Heart right ventricle (tissue), 16 donors: ENCODE measurements at regions of chr18 and their contacts with region 1.

Region 1: GRCh38 chr18:57209713-57210661 is 63.1 kb downstream of the BOD1L2 start:
- DNase-seq: peak; percentile 22 to 26
- ATAC-seq: peak; percentile 64 to 96 (median 80)
- H3K4me3 ChIP-seq: peak overlapping the region in 3 of 10 donors; percentile 11 to 17 (median 12)
- H3K27ac ChIP-seq: no peak overlapping the region
- H3K4me1 ChIP-seq: peaks cover 0 to 14% (median 9%) of the 10 kb centered on the region in 9 donors
- H3K27me3 ChIP-seq: peaks cover 0 to 52% (median 28%) of the 10 kb centered on the region in 7 donors
- CTCF ChIP-seq: no peak

Region 2: DNA sequence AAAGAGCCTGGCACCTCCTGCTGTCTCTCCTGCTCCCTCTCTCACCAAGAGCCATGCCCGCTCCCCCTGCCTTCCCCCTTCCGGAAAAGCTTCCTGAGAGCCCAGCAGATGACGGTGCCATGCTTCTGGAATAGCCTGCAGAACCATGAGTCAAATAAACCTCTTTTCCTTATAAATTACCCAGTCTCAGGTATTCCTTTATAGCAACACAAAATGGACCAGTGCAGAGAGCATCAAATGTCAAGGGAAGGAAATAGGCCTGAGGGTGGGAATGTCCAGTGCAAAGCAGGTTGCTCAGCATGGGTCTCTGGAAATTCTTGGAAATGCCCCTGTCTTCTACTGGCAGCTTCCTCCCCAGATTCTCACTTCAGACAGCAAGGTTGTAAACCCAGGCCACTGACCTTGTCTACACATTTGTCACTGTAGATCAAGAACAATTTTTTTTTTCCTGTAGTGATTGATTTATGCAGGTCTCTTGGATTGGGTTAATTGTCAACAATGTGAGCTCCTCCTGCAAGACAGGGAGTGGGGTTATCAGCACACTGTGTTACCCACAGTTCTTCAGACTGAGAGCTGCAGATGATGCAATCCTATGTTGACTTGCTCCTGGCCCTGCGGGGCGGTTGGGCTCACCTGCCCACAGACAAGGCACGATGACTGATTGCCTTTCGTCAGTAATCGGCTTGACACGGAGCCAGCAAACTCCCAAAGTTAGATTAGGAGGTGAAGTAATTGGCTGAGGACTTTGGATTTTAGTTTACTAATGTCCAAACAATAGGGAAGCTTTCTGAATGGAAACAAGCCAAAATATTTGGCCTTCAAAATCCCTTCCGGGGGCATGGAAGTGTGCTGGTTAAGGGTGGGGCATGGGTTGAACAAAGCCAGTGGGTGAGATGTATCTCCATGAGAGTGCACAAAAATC is 68.5 kb before region 1 on chr18:
- intact Hi-C with region 1: loop called in 1 of 10 experiments (anchors 10 kb)
- DNase-seq: no peak
- ATAC-seq: no peak
- H3K4me3 ChIP-seq: no peak overlapping the region
- H3K27ac ChIP-seq: no peak overlapping the region
- H3K4me1 ChIP-seq: peaks cover 0 to 6% (median 0%) of the 10 kb centered on the region in 9 donors
- H3K27me3 ChIP-seq: peaks cover 0 to 5% (median 0%) of the 10 kb centered on the region in 7 donors
- CTCF ChIP-seq: no peak

Region 3: GRCh38 chr18:57294547-57294946 is 84.6 kb after region 1 on chr18:
- intact Hi-C with region 1: no loop called
- DNase-seq: no peak
- ATAC-seq: no peak
- H3K4me3 ChIP-seq: no peak overlapping the region
- H3K27ac ChIP-seq: no peak overlapping the region
- H3K4me1 ChIP-seq: no peaks in the 10 kb centered on the region
- H3K27me3 ChIP-seq: peaks cover 0 to 13% (median 0%) of the 10 kb centered on the region in 7 donors
- CTCF ChIP-seq: no peak